Left cardiac atrium (tissue), 4 donors: ENCODE measurements at regions of chr2 and their contacts with region 1.

Region 1: DNA sequence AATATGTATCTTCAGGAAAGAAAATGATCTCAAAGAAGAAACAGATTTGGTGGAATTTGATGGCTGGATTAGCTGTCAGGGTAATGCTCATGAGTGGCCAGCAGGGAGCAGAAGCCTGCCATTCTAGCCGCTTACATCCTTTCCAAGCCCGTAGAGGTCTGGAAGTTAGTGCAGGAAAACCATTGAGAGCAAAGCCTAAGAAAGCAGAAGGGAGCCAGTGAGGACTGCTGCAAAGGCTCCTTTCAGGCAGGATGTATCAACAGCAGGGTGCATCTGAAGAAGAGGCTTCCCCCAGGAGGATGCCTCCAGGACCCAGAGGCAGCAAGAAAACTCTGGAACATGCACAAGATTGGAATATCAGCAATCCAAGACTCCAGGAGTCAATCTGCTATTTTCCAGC is 22.9 kb upstream of the LBH start:
- DNase-seq: peak; percentile 67
- ATAC-seq: peak; percentile 90 to 95

Region 2: GRCh38 chr2:30691948-30692828 is 483.7 kb after region 1 on chr2:
- intact Hi-C with region 1: loop called in 1 of 2 experiments (anchors 5 kb)
- DNase-seq: no peak
- ATAC-seq: peak; percentile 11 to 35

Region 3: DNA sequence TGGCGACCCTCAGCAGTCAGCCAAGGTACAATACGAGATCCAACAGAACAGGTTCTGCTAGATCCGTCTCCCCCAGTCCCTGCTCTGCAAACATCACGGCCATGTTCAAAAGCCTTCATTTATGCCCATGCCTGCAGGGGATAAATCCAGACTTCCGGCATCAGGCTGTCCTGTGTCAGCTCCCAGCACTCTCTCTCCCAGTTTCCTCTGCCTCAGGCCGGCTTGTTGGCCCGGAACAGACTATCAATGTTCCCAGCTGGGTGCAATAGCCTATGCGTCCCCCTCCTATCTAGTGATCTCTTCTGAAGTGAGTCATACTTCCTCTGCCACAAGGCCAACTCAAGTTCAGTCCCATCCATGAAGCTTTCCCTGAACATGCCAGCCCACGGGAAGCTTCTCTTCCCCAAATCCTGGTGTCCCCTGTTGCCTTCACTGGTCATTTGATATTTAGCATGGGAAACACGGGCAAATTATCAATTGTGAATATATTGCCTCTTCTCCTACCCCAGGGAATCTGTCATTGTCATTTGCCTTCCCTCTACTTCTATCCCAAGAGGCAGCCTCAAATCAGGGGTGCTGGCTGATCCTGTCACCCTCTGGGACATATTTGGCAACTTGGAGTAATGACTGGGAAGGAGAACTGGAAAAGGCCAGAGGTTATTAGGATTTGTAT is 547.7 kb after region 1 on chr2:
- intact Hi-C with region 1: no loop called
- DNase-seq: no peak
- ATAC-seq: no peak